Breast epithelium (tissue), 4 donors: ENCODE measurements at regions of chr18 and their contacts with region 1.

Region 1: DNA sequence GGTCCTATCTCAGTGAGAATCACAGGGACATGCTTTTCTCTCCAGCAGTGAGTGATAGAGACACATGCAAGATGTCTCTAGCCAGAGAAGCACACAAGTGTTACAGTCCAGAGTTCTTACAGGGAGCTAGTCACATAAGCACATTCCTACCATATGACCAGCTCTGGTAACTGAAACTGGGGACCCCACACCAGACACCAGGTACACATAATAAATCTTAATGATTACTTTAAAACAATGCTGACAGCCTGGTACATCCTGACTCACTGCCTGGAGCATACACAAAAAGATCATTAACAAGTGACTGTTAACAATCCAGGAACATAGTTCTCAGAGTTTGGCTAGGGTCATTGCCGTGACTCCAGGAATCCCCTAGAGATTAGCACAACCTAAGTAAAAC is 53.6 kb downstream of the GALNT1 start:
- DNase-seq: no peak
- H3K4me3 ChIP-seq: no peak overlapping the region
- H3K27ac ChIP-seq: peak overlapping the region in 1 of 2 donors; percentile 38
- H3K4me1 ChIP-seq: no peaks in the 10 kb centered on the region
- H3K27me3 ChIP-seq: no peaks in the 10 kb centered on the region
- CTCF ChIP-seq: no peak
- POLR2A ChIP-seq: no peak

Region 2: DNA sequence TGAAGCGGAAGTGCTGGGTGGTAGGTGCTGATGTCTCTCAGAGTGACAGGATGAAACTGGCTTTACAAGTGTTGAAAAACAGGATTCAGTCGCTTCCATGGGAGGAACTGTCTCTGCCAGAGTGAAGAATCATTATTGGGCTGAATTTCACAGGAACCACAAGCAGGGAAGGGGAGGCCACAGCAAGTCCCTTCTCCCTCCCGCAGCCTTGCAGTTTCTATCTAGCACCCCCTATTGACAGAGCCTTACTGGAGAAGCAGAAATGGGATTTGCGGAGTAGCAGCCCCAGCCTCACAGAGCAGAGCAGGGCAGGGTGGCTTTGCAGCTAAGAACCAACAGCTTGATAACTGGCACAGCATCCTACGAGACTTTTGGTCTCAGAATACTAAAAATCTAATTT is 304.0 kb after region 1 on chr18:
- intact Hi-C with region 1: no loop called
- DNase-seq: no peak
- H3K4me3 ChIP-seq: no peak overlapping the region
- H3K27ac ChIP-seq: peak overlapping the region in 1 of 2 donors; percentile 31
- H3K4me1 ChIP-seq: no peaks in the 10 kb centered on the region
- H3K27me3 ChIP-seq: no peaks in the 10 kb centered on the region
- CTCF ChIP-seq: no peak
- POLR2A ChIP-seq: no peak

Region 3: DNA sequence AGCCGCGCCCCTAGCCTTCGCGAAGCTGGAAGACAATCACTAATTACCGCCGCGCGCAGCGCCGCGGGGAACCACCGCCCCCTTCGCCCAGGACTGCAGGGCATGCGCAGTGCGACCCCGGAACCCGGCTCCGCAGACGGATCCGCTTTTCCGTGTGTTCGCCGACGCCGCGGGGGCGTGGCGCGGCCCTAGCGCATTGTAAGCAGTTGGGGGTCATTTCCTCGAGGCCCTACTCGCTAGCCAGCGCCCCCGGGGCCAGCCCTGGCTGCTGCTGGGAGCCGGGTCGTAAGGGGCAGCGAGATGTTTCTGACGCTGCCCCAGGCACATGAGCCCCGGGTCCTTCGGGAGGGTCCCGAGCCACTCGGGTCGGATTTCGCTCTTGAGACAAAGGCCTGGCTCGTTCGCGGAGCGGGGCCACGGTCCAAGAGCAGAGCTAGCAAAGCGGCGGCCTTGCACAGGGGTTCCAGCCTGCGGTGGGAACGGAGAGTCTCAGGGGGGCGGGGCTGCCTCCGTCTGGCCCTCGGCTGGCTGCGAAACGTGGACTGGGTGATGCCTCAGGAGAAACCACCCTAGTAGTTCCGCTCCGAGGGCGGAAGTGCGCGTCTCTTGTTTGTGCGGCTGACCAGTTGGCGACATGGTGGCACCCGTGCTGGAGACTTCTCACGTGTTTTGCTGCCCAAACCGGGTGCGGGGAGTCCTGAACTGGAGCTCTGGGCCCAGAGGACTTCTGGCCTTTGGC is 494.3 kb after region 1 on chr18 and contains the starts of genes ELP2 and SLC39A6:
- intact Hi-C with region 1: loop called (anchors 10 kb)
- DNase-seq: peak; percentile 94 to 96
- H3K4me3 ChIP-seq: peak within 1 kb of the TSS; percentile 81 to 90 (median 89)
- H3K27ac ChIP-seq: peak within 1 kb of the TSS; percentile 97 to 98
- H3K4me1 ChIP-seq: peaks cover 0 to 9% of the 10 kb centered on the region in 2 donors
- H3K27me3 ChIP-seq: no peaks in the 10 kb centered on the region
- CTCF ChIP-seq: no peak
- POLR2A ChIP-seq: peak; percentile 43
- total RNA-seq, gene ELP2: 66.9 to 165 (median 139) TPM
- total RNA-seq, gene SLC39A6: 44.8 to 502 (median 235) TPM